ENCODE measurements at regions of chr12 and their contacts with region 1.

Region 1: DNA sequence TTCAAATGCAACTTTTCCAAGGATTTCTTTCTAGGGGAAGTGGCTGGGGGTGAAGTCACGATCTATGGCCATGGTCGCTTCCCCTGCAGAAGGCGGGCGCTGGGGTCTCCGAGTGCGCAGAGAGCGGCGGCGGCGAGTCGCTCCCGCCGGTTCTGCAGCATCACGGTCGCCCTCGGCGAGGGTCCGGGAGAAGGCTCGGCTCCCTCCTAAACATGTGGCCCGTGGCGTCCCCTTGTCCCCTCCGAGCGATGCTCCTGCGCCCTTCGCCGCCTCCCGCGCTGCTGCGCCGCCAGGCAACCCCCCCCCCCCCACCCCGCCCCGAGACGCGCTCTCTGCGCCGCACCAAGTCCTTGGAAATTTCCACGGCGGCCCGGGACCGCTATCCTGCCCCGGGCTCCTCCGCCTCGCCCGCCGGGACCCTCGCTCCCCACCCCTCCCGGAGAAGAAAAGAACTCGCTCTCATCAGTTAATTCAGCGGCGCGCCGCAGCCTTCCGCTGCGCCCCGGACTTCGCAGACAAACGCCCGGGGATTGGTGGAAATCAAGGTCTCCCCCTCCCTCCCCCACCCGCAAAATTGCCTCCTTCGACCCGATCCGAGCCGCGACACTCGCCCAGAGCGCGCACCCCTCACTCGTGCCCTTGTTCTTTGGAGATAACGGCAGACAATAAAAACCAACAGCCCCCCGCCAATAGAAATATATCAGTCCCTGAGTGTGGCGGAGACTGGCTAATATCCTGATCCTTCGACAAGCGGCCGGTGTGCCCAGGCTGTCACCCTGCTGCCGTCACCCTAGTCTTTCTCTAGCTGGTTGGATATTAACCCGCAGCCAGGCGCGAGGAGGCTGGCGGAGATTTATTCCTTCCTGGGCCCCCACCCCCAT is at the start of gene ST8SIA1:
- DNase-seq: peak; percentile 8 to 84 (median 58)
- H3K4me3 ChIP-seq: peak within 1 kb of the TSS; percentile 60
- H3K4me3 Mint-ChIP-seq: peak within 1 kb of the TSS; percentile 90 to 99 (median 97)
- H3K27ac ChIP-seq: peak within 1 kb of the TSS; percentile 73
- H3K27ac Mint-ChIP-seq: peak within 1 kb of the TSS; percentile 89 to 98 (median 93)
- H3K4me1 ChIP-seq: peaks cover 21% of the 10 kb centered on the region
- H3K4me1 Mint-ChIP-seq: peaks cover 41 to 51% (median 50%) of the 10 kb centered on the region in 3 donors
- H3K27me3 ChIP-seq: no peaks in the 10 kb centered on the region
- H3K27me3 Mint-ChIP-seq: peaks cover 0 to 12% of the 10 kb centered on the region in 2 donors
- total RNA-seq, gene ST8SIA1: 10.2 to 11.4 TPM

Region 2: DNA sequence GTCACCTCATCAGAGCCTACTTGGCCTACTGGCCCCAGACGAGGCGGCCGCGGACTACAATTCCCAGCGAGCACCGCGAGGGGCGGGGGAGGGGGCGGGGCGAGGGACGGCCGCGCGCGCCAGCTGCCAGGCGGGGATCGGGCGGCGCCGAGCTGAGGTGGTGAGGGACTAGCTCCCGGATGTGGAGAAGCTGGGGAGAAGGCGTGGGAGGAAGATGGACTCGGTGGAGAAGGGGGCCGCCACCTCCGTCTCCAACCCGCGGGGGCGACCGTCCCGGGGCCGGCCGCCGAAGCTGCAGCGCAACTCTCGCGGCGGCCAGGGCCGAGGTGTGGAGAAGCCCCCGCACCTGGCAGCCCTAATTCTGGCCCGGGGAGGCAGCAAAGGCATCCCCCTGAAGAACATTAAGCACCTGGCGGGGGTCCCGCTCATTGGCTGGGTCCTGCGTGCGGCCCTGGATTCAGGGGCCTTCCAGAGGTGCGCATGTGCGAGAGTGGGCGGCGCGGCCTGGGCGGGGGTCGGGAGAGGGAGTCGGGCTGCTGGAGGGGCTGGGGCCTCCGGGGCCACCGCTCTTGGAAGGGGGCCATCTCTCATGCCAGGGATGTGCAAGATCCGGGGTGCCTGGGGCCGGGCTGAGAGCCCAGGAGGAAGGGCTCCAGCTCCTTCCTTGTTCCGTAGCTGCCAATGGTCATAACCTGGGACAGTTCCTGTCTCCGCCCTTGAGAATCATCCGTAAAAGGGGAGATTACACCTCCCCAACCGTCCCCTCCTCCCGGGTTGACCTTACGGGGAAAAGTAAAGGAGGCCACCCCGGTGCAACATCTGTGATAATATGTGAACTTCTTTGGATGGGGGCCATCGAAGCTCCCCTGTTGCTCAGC is 288.3 kb before region 1 on chr12 and contains the start of gene CMAS:
- CTCF ChIA-PET with region 1: interaction called, 10 read pairs
- POLR2A ChIA-PET with region 1: interaction called, 9 read pairs
- DNase-seq: peak; percentile 64 to 84 (median 73)
- H3K4me3 ChIP-seq: peak within 1 kb of the TSS; percentile 82
- H3K4me3 Mint-ChIP-seq: peak within 1 kb of the TSS; percentile 92 to 96 (median 95)
- H3K27ac ChIP-seq: peak within 1 kb of the TSS; percentile 67
- H3K27ac Mint-ChIP-seq: peak within 1 kb of the TSS; percentile 57 to 95 (median 88)
- H3K4me1 ChIP-seq: peaks cover 23% of the 10 kb centered on the region
- H3K4me1 Mint-ChIP-seq: peaks cover 36 to 54% (median 51%) of the 10 kb centered on the region in 3 donors
- H3K27me3 ChIP-seq: no peaks in the 10 kb centered on the region
- H3K27me3 Mint-ChIP-seq: no peaks in the 10 kb centered on the region
- total RNA-seq, gene CMAS: 40.3 to 41.0 TPM

Region 3: DNA sequence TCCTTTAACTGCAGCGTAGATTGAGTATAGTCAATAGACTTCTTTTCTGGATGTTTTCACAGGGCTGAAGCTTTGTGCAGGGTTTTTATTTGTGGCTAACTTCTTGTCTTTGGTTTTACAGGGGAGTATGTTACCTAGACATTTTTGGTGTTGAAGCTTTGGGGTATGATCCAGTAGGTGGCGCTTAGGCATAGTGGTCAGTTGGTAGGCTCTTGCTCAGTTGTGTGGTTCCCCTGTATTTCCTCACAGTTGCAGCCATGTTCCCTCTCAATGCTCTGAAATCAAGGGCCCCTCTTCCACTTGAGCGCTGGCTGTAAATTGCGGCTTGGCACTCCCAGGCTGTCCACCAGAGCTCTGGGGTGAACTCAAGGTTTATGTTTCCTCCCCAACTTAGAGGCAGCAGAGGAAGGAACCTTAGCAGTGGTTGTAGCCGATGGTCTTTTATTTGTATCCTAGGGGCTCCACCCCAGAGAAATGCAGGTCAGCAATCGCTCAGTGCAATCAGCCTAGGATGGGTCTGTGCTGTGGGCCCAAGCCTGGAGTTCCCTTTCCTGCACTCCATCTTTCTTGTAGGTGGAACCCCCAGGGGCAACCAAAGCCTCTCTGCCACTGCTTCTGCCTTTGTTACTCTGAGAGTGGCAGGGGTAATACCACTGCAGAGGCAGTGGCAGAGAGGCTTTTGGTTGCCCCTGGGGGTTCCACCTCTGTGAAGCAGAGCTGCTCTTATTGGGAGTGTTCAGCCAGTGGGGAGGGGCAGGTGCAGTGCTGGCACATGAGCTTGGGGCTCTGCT is 233.5 kb before region 1 on chr12:
- CTCF ChIA-PET with region 1: interaction called, 10 read pairs
- POLR2A ChIA-PET with region 1: interaction called, 3 read pairs
- DNase-seq: peak in 3 of 5 donors; percentile 16 to 61 (median 47)
- H3K4me3 ChIP-seq: no peak overlapping the region
- H3K4me3 Mint-ChIP-seq: peak overlapping the region in 1 of 7 donors; percentile 40
- H3K27ac ChIP-seq: no peak overlapping the region
- H3K27ac Mint-ChIP-seq: no peak overlapping the region
- H3K4me1 ChIP-seq: peaks cover 10% of the 10 kb centered on the region
- H3K4me1 Mint-ChIP-seq: peaks cover 6 to 11% (median 8%) of the 10 kb centered on the region in 3 donors
- H3K27me3 ChIP-seq: no peaks in the 10 kb centered on the region
- H3K27me3 Mint-ChIP-seq: no peaks in the 10 kb centered on the region

Region 4: DNA sequence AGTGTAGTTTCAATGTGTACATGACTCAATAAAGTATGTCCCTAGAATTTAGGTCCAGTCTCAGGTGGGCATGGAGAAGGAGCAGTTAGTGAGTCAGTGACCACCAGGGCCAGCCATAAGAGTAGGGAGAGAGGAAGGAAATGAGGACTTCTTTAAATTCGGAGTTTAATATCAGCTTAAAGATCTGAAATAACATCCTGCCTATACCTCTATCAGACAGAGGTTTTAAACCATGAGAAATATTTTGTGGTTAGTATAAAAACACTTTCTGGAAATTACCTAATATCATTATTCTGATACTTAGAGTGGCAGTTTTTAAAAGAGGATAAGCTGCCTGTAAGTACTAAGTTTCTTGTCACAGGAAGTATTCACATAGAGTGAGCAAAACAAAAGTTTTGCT is 61.6 kb after region 1 on chr12:
- CTCF ChIA-PET with region 1: interaction called, 5 read pairs
- POLR2A ChIA-PET with region 1: interaction called, 15 read pairs
- DNase-seq: peak in 3 of 5 donors; percentile 8 to 64 (median 64)
- H3K4me3 ChIP-seq: no peak overlapping the region
- H3K4me3 Mint-ChIP-seq: peak overlapping the region; percentile 38 to 78 (median 63)
- H3K27ac ChIP-seq: no peak overlapping the region
- H3K27ac Mint-ChIP-seq: peak overlapping the region; percentile 78 to 95 (median 90)
- H3K4me1 ChIP-seq: peaks cover 36% of the 10 kb centered on the region
- H3K4me1 Mint-ChIP-seq: peaks cover 37 to 51% (median 51%) of the 10 kb centered on the region in 3 donors
- H3K27me3 ChIP-seq: no peaks in the 10 kb centered on the region
- H3K27me3 Mint-ChIP-seq: no peaks in the 10 kb centered on the region

Region 5: GRCh38 chr12:22443379-22444316 is 109.0 kb after region 1 on chr12:
- CTCF ChIA-PET with region 1: interaction called, 13 read pairs
- POLR2A ChIA-PET with region 1: interaction called, 7 read pairs
- DNase-seq: peak; percentile 28 to 78 (median 47)
- H3K4me3 ChIP-seq: no peak overlapping the region
- H3K4me3 Mint-ChIP-seq: no peak overlapping the region
- H3K27ac ChIP-seq: no peak overlapping the region
- H3K27ac Mint-ChIP-seq: peak overlapping the region in 1 of 8 donors; percentile 15
- H3K4me1 ChIP-seq: peaks cover 6% of the 10 kb centered on the region
- H3K4me1 Mint-ChIP-seq: peaks cover 4 to 19% (median 6%) of the 10 kb centered on the region in 3 donors
- H3K27me3 ChIP-seq: no peaks in the 10 kb centered on the region
- H3K27me3 Mint-ChIP-seq: no peaks in the 10 kb centered on the region

Measured in CD8-positive, alpha-beta memory T cell (primary cell).